Stomach (tissue), 19 donors: ENCODE measurements at regions of chr10 and their contacts with region 1.

Region 1: GRCh38 chr10:61284222-61284890 is 168.8 kb downstream of the TMEM26 start:
- DNase-seq: peak in 1 of 2 donors; percentile 84
- H3K4me3 ChIP-seq: no peak overlapping the region
- H3K27ac ChIP-seq: no peak overlapping the region
- H3K4me1 ChIP-seq: peaks cover 0 to 25% (median 10%) of the 10 kb centered on the region in 4 donors
- H3K27me3 ChIP-seq: no peaks in the 10 kb centered on the region
- CTCF ChIP-seq: peak in 5 of 7 experiments; percentile 44 to 77 (median 69)
- EP300 ChIP-seq: no peak
- POLR2A ChIP-seq: no peak

Region 2: GRCh38 chr10:61140765-61141392 is 143.5 kb before region 1 on chr10:
- intact Hi-C with region 1: loop called (anchors 10 kb)
- DNase-seq: peak; percentile 37 to 88
- H3K4me3 ChIP-seq: no peak overlapping the region
- H3K27ac ChIP-seq: no peak overlapping the region
- H3K4me1 ChIP-seq: peaks cover 0 to 8% (median 3%) of the 10 kb centered on the region in 4 donors
- H3K27me3 ChIP-seq: no peaks in the 10 kb centered on the region
- CTCF ChIP-seq: peak in 5 of 7 experiments; percentile 39 to 78 (median 54)
- EP300 ChIP-seq: no peak
- POLR2A ChIP-seq: no peak